Mammary epithelial cell (primary cell): ENCODE measurements at regions of chr3 and their contacts with region 1.

Region 1: GRCh38 chr3:111594205-111594604 is 941 bp downstream of the ZBED2 start:
- DNase-seq: peak; percentile 89
- H3K4me3 ChIP-seq: peak overlapping the region; percentile 32 to 71 (median 69)
- H3K27ac ChIP-seq: peak overlapping the region; percentile 96
- H3K4me1 ChIP-seq: peaks cover 52% of the 10 kb centered on the region
- H3K27me3 ChIP-seq: no peaks in the 10 kb centered on the region
- CTCF ChIP-seq: no peak

Region 2: GRCh38 chr3:111610189-111610588 is 16.0 kb after region 1 on chr3:
- CTCF ChIA-PET with region 1: no interaction called
- dilution Hi-C with region 1: no loop called
- in situ Hi-C with region 1: no loop called
- intact Hi-C with region 1: loop called (anchors 1 kb)
- DNase-seq: peak; percentile 81
- H3K4me3 ChIP-seq: peak overlapping the region; percentile 6 to 21 (median 10)
- H3K27ac ChIP-seq: peak overlapping the region; percentile 95
- H3K4me1 ChIP-seq: peaks cover 24% of the 10 kb centered on the region
- H3K27me3 ChIP-seq: no peaks in the 10 kb centered on the region
- CTCF ChIP-seq: no peak

Region 3: GRCh38 chr3:111616417-111617105 is 22.4 kb after region 1 on chr3:
- CTCF ChIA-PET with region 1: no interaction called
- dilution Hi-C with region 1: no loop called
- in situ Hi-C with region 1: no loop called
- intact Hi-C with region 1: loop called (anchors 1 kb)
- DNase-seq: peak; percentile 65
- H3K4me3 ChIP-seq: no peak overlapping the region
- H3K27ac ChIP-seq: no peak overlapping the region
- H3K4me1 ChIP-seq: peaks cover 20% of the 10 kb centered on the region
- H3K27me3 ChIP-seq: no peaks in the 10 kb centered on the region
- CTCF ChIP-seq: peak; percentile 51 to 66

Region 4: GRCh38 chr3:111803123-111803593 is 209.0 kb after region 1 on chr3:
- CTCF ChIA-PET with region 1: no interaction called
- dilution Hi-C with region 1: no loop called
- in situ Hi-C with region 1: no loop called
- intact Hi-C with region 1: loop called (anchors 5 kb)
- DNase-seq: peak; percentile 96
- H3K4me3 ChIP-seq: peak overlapping the region in 1 of 3 experiments; percentile 4
- H3K27ac ChIP-seq: peak overlapping the region; percentile 100
- H3K4me1 ChIP-seq: peaks cover 40% of the 10 kb centered on the region
- H3K27me3 ChIP-seq: no peaks in the 10 kb centered on the region
- CTCF ChIP-seq: no peak